BJ (cell line): ENCODE measurements at regions of chr15 and their contacts with region 1.

Region 1: GRCh38 chr15:26084786-26085185 is 221.7 kb upstream of the ATP10A start:
- DNase-seq: no peak
- H3K4me3 ChIP-seq: no peak overlapping the region
- H3K27me3 ChIP-seq: no peaks in the 10 kb centered on the region
- CTCF ChIP-seq: no peak

Region 2: GRCh38 chr15:25933456-25934158 is 151.2 kb before region 1 on chr15:
- CTCF ChIA-PET with region 1: no interaction called
- POLR2A ChIA-PET with region 1: no interaction called
- DNase-seq: peak; percentile 38
- H3K4me3 ChIP-seq: peak overlapping the region; percentile 28; the same call in 1 of the 2 replicates
- H3K27me3 ChIP-seq: no peaks in the 10 kb centered on the region
- CTCF ChIP-seq: peak; percentile 92

Region 3: GRCh38 chr15:26095710-26096330 is 11.0 kb after region 1 on chr15:
- CTCF ChIA-PET with region 1: interaction called, 12 read pairs
- POLR2A ChIA-PET with region 1: no interaction called
- DNase-seq: no peak
- H3K4me3 ChIP-seq: no peak overlapping the region
- H3K27me3 ChIP-seq: no peaks in the 10 kb centered on the region
- CTCF ChIP-seq: peak; percentile 52

Region 4: DNA sequence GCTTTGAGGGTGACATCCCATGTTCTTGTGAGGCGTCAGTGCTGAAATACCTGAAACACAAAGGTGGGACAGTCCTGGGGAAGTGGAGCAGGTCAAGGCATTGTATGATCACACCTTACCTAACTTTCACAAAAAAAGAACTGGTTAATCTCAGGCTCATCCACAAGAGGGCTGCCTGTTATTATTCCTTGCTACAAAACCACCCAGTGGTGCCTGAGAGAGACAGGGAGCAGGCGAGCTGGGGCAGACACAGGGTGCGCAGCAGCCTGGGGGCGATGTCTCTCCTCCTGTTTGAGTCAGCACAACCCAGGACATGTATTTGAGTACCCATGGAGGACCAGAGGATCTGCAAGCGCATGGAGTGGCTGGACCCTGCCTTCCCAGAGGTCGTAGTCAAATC is 95.1 kb after region 1 on chr15:
- CTCF ChIA-PET with region 1: no interaction called
- POLR2A ChIA-PET with region 1: no interaction called
- DNase-seq: no peak
- H3K4me3 ChIP-seq: no peak overlapping the region
- H3K27me3 ChIP-seq: no peaks in the 10 kb centered on the region
- CTCF ChIP-seq: no peak